PC-9 (cell line): ENCODE measurements at regions of chr1 and their contacts with region 1.

Region 1: GRCh38 chr1:156689035-156689952 is 12.1 kb upstream of the NES start:
- DNase-seq: peak; percentile 72 to 84
- H3K4me3 ChIP-seq: peak overlapping the region; percentile 48; the same call in 1 of the 2 replicates
- H3K27ac ChIP-seq: no peak overlapping the region
- H3K4me1 ChIP-seq: peaks cover 82% of the 10 kb centered on the region
- H3K27me3 ChIP-seq: no peaks in the 10 kb centered on the region
- CTCF ChIP-seq: peak; percentile 95

Region 2: GRCh38 chr1:156571949-156572662 is 117.2 kb before region 1 on chr1 and contains the start of gene IQGAP3:
- CTCF ChIA-PET with region 1: interaction called, 15 read pairs
- POLR2A ChIA-PET with region 1: no interaction called
- intact Hi-C with region 1: no loop called
- DNase-seq: peak; percentile 79 to 85
- H3K4me3 ChIP-seq: peak within 1 kb of the TSS; percentile 77
- H3K27ac ChIP-seq: peak within 1 kb of the TSS; percentile 76
- H3K4me1 ChIP-seq: peaks cover 14% of the 10 kb centered on the region
- H3K27me3 ChIP-seq: no peaks in the 10 kb centered on the region
- CTCF ChIP-seq: no peak
- total RNA-seq, gene IQGAP3: 63.1 and 63.4 TPM in 2 replicates

Region 3: DNA sequence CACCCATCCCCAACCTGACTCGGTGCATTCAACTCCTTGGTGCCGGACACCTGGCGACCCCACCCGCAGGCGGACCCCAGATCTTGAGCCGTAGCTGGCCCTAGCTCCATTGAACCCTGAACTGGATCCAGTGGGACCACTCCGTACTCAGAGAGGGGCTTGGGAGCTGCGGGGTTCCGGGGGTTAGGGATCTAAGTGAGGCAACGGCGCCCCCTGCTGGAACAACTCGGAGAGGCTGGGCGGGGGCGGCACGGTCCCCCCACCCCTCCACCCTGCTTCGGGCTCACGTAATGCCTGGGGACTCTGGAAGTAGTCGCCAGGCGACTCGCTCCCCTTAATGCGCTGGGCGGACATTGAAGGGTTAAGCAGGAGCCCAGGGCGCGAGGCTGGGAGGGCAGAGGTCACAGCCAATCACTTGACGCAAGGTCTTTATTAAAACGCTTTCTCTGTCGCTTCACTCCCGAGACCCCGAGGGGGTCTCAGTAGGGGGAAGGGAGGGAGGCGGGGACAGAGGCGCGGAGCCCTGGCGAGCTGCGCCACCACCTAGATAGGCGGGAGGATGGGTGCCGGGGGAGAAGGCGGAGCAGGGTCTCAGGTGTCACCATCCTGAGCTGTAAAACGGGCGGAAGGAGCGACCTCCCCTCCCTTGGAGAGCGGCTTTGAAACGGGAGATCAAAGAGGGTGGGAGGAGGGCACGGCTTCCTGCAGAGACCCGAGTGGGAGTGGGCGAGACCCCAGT is 16.8 kb after region 1 on chr1:
- CTCF ChIA-PET with region 1: interaction called, 109 read pairs
- POLR2A ChIA-PET with region 1: interaction called, 28 read pairs
- intact Hi-C with region 1: loop called (anchors 1 kb)
- DNase-seq: peak in 1 of 2 experiments; percentile 86
- H3K4me3 ChIP-seq: peak overlapping the region; percentile 79
- H3K27ac ChIP-seq: 0 out of 2 replicates have a peak overlapping the region, but pooled peaks have one; percentile 55
- H3K4me1 ChIP-seq: peaks cover 47% of the 10 kb centered on the region
- H3K27me3 ChIP-seq: no peaks in the 10 kb centered on the region
- CTCF ChIP-seq: peak; percentile 98

Region 4: GRCh38 chr1:156751758-156752757 is 62.8 kb after region 1 on chr1:
- CTCF ChIA-PET with region 1: interaction called, 5 read pairs
- POLR2A ChIA-PET with region 1: interaction called, 3 read pairs
- intact Hi-C with region 1: loop called (anchors 2 kb)
- DNase-seq: peak; percentile 87 to 95
- H3K4me3 ChIP-seq: peak overlapping the region; percentile 95
- H3K27ac ChIP-seq: peak overlapping the region; percentile 59
- H3K4me1 ChIP-seq: peaks cover 21% of the 10 kb centered on the region
- H3K27me3 ChIP-seq: no peaks in the 10 kb centered on the region
- CTCF ChIP-seq: no peak

Region 5: DNA sequence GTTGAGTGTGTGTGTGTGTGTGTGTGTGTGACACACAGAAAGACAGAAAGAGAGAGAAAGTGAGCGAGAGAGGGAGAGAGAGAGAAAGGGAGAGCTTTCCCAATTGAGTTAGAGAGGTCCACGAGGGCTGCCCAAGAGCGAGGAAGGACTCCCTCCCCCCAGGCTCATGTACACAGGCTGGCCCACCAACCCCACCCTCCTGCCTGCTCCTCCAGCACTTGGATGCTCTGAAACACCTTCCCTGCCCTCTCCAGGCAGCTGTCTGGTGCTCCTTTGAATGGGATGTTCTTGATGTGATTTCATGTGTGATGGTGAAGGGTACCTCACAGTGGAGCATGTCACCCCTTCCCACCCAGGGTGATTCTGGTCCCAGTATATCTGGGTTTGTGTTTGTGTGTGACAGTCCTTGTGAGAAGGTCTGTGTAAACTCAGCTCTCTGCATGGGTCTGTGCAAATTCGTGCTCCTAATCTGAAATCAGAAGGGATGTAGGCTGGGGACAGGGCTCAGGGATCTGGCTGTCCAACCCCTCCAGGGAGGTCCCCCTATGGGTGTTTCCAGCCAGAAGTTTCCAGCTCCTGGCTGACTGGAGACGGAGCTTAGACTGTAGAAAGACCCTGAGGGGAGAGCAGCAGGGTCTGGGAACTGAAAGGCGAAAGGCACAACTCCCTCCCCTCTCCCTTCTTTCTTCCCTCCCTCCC is 197.4 kb after region 1 on chr1:
- CTCF ChIA-PET with region 1: interaction called, 16 read pairs
- POLR2A ChIA-PET with region 1: no interaction called
- intact Hi-C with region 1: loop called (anchors 1 kb)
- DNase-seq: no peak
- H3K4me3 ChIP-seq: no peak overlapping the region
- H3K27ac ChIP-seq: no peak overlapping the region
- H3K4me1 ChIP-seq: no peaks in the 10 kb centered on the region
- H3K27me3 ChIP-seq: peaks cover 32% of the 10 kb centered on the region
- CTCF ChIP-seq: no peak

Region 6: DNA sequence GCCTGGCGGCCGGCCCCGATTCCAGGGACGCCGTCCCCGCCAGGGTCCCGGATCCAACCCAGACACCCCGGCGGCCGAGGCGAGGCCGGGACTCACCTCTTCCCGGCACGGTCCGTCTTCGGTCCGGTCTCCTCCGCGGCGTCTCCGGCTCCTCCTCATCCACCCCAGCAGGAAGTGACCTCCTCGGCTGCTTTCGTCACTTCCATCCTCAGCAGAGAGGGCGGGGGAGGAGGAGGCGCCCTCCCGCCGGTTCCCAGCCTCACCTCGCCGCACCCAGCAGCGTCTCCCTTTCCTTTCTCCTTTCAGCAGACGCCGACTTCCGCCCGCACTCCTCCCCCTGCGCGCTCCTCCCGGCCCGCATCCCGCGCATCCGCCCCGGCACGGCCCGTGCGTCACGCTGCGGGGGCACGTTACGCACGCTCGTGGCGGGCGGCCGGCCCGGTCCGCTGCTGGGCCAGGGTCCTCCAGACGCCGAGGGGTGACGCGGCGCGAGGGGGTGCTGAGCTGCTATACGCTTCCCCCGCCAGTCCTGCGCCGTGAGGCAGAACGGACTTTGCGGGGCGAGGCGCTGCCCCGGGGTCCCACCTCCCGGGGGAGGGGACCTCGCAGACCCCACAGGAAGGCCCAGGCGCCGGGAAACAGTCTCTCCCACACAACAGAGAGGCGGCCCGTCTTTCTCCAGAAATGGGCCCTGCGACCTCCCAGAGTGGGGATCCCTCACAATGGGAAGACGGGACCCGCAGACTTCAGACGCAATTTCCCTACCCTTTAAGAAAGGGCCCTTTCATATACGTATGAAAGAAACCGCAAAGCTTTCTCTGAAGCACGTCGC is 449.1 kb after region 1 on chr1 and contains the start of gene ETV3:
- CTCF ChIA-PET with region 1: no interaction called
- POLR2A ChIA-PET with region 1: no interaction called
- intact Hi-C with region 1: loop called (anchors 10 kb)
- DNase-seq: peak; percentile 88 to 90
- H3K4me3 ChIP-seq: peak within 1 kb of the TSS; percentile 86
- H3K27ac ChIP-seq: peak within 1 kb of the TSS; percentile 78
- H3K4me1 ChIP-seq: peaks cover 41% of the 10 kb centered on the region
- H3K27me3 ChIP-seq: no peaks in the 10 kb centered on the region
- CTCF ChIP-seq: no peak
- total RNA-seq, gene ETV3: 22.1 and 26.2 TPM in 2 replicates